ENCODE measurements at regions of chr18 and their contacts with region 1.

Region 1: GRCh38 chr18:12947355-12948041 is at the start of gene SEH1L:
- DNase-seq: peak; percentile 97 to 98 (median 98)
- H3K4me3 ChIP-seq: peak within 1 kb of the TSS; percentile 79 to 89
- H3K4me3 Mint-ChIP-seq: peak within 1 kb of the TSS; percentile 92 to 98 (median 96)
- H3K27ac ChIP-seq: peak within 1 kb of the TSS; percentile 90
- H3K27ac Mint-ChIP-seq: peak within 1 kb of the TSS; percentile 86 to 99 (median 98)
- H3K4me1 ChIP-seq: peaks cover 36% of the 10 kb centered on the region
- H3K4me1 Mint-ChIP-seq: peaks cover 20 to 40% (median 31%) of the 10 kb centered on the region in 4 donors
- H3K27me3 ChIP-seq: no peaks in the 10 kb centered on the region
- H3K27me3 Mint-ChIP-seq: no peaks in the 10 kb centered on the region
- total RNA-seq, gene SEH1L: 28.9 to 31.3 TPM

Region 2: GRCh38 chr18:12702221-12703095 is 245.0 kb before region 1 on chr18 and contains the starts of genes CEP76 and PSMG2:
- CTCF ChIA-PET with region 1: no interaction called
- POLR2A ChIA-PET with region 1: interaction called, 21 read pairs
- intact Hi-C with region 1: loop called (anchors 1 kb)
- DNase-seq: peak; percentile 84 to 90 (median 87)
- H3K4me3 ChIP-seq: peak within 1 kb of the TSS; percentile 82 to 99
- H3K4me3 Mint-ChIP-seq: peak within 1 kb of the TSS; percentile 87 to 100 (median 98)
- H3K27ac ChIP-seq: peak within 1 kb of the TSS; percentile 93
- H3K27ac Mint-ChIP-seq: peak within 1 kb of the TSS; percentile 89 to 100 (median 96)
- H3K4me1 ChIP-seq: peaks cover 46% of the 10 kb centered on the region
- H3K4me1 Mint-ChIP-seq: peaks cover 32 to 60% (median 48%) of the 10 kb centered on the region in 4 donors
- H3K27me3 ChIP-seq: no peaks in the 10 kb centered on the region
- H3K27me3 Mint-ChIP-seq: no peaks in the 10 kb centered on the region
- total RNA-seq, gene CEP76: 9.9 to 13.1 TPM
- total RNA-seq, gene PSMG2: 59.7 to 62.0 TPM

Region 3: GRCh38 chr18:12990967-12991838 is 43.7 kb after region 1 on chr18 and contains the start of gene CEP192:
- CTCF ChIA-PET with region 1: interaction called, 3 read pairs
- POLR2A ChIA-PET with region 1: interaction called, 26 read pairs
- intact Hi-C with region 1: loop called (anchors 1 kb)
- DNase-seq: peak; percentile 97 to 98 (median 98)
- H3K4me3 ChIP-seq: peak within 1 kb of the TSS; percentile 70 to 86
- H3K4me3 Mint-ChIP-seq: peak within 1 kb of the TSS; percentile 93 to 99 (median 98)
- H3K27ac ChIP-seq: peak within 1 kb of the TSS; percentile 93
- H3K27ac Mint-ChIP-seq: peak within 1 kb of the TSS; percentile 88 to 99 (median 97)
- H3K4me1 ChIP-seq: peaks cover 42% of the 10 kb centered on the region
- H3K4me1 Mint-ChIP-seq: peaks cover 0 to 29% (median 23%) of the 10 kb centered on the region in 4 donors
- H3K27me3 ChIP-seq: no peaks in the 10 kb centered on the region
- H3K27me3 Mint-ChIP-seq: no peaks in the 10 kb centered on the region
- total RNA-seq, gene CEP192: 42.5 to 45.5 TPM

Region 4: GRCh38 chr18:13381944-13382365 is 434.5 kb after region 1 on chr18:
- CTCF ChIA-PET with region 1: no interaction called
- POLR2A ChIA-PET with region 1: no interaction called
- intact Hi-C with region 1: loop called (anchors 2 kb)
- DNase-seq: peak; percentile 56 to 76 (median 69)
- H3K4me3 ChIP-seq: peak overlapping the region; percentile 40 to 63
- H3K4me3 Mint-ChIP-seq: peak overlapping the region; percentile 83 to 97 (median 90)
- H3K27ac ChIP-seq: peak overlapping the region; percentile 89
- H3K27ac Mint-ChIP-seq: peak overlapping the region; percentile 98 to 100 (median 99)
- H3K4me1 ChIP-seq: peaks cover 68% of the 10 kb centered on the region
- H3K4me1 Mint-ChIP-seq: peaks cover 49 to 76% (median 71%) of the 10 kb centered on the region in 4 donors
- H3K27me3 ChIP-seq: no peaks in the 10 kb centered on the region
- H3K27me3 Mint-ChIP-seq: no peaks in the 10 kb centered on the region